GM10248 (cell line): ENCODE measurements at regions of chr1 and their contacts with region 1.

Region 1: GRCh38 chr1:109493805-109494539 is at the start of gene CYB561D1:
- DNase-seq: peak; percentile 94
- CTCF ChIP-seq: peak; percentile 74

Region 2: DNA sequence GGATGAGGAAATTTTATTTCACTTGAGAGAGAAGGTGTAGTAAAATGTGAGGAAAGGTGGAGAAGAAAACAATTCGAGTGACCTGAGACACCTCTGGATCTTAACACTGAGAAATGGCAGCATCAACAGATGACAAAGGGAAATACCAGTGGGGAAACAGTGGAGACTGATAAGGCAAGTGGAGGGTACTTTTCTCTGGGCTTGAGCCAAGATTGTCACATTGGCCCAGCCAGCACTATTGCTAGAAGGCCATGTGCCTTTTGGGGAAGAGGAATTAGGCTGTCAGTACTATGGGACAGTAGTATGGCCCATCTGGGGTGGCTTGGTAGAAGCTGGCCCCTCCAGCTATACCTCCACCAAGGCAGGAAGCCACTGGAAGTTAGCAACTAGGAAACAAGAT is 19.3 kb before region 1 on chr1:
- CTCF ChIA-PET with region 1: interaction called, 11 read pairs
- POLR2A ChIA-PET with region 1: no interaction called
- DNase-seq: no peak
- CTCF ChIP-seq: no peak

Region 3: GRCh38 chr1:109483672-109484518 is 10.1 kb before region 1 on chr1 and contains the start of gene ATXN7L2:
- CTCF ChIA-PET with region 1: interaction called, 50 read pairs
- POLR2A ChIA-PET with region 1: no interaction called
- DNase-seq: peak; percentile 99
- CTCF ChIP-seq: no peak

Region 4: DNA sequence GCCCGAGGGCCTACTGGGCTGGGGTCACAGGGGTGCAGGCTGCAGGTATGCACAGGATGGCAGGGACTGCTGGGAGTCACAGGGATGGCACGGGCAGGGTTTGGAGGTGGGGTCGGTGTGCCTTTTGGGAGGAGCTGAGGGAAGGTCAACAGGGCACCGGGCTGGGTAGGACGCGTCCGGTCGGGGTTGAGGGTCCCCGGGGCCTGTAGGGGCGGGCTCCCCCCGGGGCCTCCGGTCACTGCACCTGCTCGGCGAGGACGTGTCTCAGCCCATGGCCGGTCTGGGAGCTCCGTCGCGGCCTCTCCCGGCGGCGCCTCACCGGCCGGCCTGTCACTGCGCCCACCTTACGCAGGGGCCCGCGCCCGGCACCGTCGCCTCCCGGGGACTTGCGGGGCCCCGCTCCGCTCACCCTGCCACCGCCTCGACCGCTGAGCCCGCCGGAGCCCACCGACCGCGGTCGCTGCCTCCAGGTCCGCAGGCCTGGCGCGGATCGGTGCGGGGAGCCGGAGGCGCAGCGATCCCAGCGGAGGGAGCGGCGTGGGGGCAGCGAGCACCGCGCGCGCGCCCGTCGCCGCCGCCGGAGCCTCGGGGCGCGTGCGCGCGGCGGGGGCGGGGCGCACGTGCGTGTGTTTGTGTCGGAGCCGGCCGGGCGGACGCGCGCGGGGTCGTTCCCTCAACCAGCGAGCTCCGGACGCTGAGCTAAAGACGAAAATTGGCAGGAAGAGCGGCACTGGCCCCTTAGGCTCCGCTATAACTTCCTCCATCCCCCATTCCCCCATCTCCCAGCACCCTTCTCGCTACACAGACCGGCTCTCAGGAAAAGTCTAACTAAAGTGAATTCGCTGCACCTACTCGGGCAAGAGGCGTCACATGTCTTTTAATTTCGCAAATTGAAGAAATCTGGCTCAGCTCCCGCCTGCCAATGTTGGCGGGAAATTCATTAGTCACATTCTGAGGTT is 15.5 kb after region 1 on chr1 and contains the start of gene AMIGO1:
- CTCF ChIA-PET with region 1: interaction called, 406 read pairs
- POLR2A ChIA-PET with region 1: no interaction called
- DNase-seq: peak; percentile 75
- CTCF ChIP-seq: no peak